Endothelial cell of umbilical vein (primary cell): ENCODE measurements at regions of chr13 and their contacts with region 1.

Region 1: DNA sequence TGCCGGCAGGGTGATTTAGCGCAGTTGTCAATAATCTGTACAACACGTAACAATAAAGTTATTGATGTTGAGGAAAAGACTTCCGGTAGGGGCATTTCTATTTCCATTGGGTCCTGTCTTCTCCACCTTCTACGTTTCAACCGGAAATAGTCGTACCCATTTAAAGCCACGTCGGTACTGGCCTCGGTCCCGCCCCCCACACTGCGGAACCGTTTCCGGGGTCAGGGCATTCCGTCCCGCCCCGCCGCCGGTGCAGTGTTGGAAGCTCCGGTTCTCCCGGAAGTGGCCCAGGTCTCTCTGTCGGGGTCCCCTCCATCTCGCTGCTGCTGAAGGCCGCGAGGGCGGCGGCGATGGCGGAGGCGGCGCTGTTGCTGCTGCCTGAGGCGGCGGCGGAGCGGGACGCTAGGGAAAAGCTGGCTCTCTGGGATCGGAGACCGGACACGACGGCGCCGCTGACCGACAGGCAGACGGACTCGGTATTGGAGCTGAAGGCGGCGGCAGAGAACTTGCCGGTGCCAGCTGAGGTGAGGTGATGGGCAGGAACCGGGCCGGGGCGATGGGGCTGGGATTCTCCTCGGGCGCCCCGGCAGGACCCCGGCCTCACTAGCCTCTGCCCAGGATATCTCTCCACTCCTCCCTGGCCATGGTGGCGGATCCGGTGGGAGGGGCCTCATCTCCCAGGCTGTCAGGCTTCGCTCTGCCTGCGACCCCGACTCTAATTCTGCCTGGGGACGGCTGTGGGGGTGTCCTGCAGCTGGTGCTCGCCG is at the start of gene COG3:
- DNase-seq: peak; percentile 96
- H3K4me3 ChIP-seq: peak within 1 kb of the TSS; percentile 44 to 86 (median 71)
- H3K27ac ChIP-seq: peak within 1 kb of the TSS; percentile 72
- H3K4me1 ChIP-seq: peaks cover 12% of the 10 kb centered on the region
- H3K27me3 ChIP-seq: peaks cover 4 to 8% of the 10 kb centered on the region in 2 experiments
- CTCF ChIP-seq: peak in 1 of 2 donors; percentile 25
- POLR2A ChIP-seq: peak; percentile 63
- total RNA-seq, gene COG3: 27.0 and 28.7 TPM in 2 replicates

Region 2: DNA sequence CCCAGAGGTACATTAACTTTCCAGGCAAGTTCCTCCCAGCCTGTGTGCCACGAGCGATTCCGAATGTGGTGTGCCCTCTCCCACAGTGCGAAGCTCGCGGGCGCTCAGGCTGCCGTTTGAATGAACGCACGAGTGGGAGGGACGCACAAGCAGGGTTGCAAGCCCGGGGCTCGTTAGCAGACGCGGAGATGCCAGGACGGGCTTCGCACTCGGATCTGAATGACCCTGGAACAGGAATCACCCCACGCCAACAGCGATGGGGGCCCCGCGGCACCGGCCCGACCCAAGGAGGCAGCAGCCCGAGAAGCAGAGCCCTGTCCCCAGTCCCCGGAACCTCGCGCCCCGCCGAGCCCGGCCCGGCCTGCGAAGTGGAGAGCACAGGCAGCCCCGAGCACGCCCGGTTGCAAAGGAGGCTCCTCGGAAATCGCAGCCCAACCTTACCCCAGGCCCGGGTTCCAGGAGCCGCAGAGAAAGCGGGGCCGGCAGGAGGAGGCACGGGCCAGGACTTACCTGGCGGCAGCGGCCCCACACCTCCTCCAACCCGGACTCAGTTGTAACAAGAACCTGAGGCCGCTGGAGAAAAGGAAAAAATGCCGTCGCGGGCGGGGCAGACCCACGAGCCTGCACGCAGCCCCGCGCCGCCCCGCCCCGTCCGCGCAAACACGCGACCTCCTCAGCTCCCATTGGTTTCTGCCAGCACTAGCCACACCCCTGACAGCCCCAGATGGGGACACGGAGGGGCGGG is 46.9 kb before region 1 on chr13 and contains the start of gene SLC25A30:
- CTCF ChIA-PET with region 1: interaction called, 16 read pairs
- POLR2A ChIA-PET with region 1: interaction called, 4 read pairs
- dilution Hi-C with region 1: no loop called
- intact Hi-C with region 1: loop called (anchors 1 kb)
- DNase-seq: peak; percentile 94
- H3K4me3 ChIP-seq: peak within 1 kb of the TSS; percentile 66 to 87 (median 79)
- H3K27ac ChIP-seq: peak within 1 kb of the TSS; percentile 56
- H3K4me1 ChIP-seq: peaks cover 24% of the 10 kb centered on the region
- H3K27me3 ChIP-seq: no peaks in the 10 kb centered on the region
- CTCF ChIP-seq: no peak
- POLR2A ChIP-seq: peak; percentile 78
- total RNA-seq, gene SLC25A30: 27.0 and 28.9 TPM in 2 replicates

Region 3: DNA sequence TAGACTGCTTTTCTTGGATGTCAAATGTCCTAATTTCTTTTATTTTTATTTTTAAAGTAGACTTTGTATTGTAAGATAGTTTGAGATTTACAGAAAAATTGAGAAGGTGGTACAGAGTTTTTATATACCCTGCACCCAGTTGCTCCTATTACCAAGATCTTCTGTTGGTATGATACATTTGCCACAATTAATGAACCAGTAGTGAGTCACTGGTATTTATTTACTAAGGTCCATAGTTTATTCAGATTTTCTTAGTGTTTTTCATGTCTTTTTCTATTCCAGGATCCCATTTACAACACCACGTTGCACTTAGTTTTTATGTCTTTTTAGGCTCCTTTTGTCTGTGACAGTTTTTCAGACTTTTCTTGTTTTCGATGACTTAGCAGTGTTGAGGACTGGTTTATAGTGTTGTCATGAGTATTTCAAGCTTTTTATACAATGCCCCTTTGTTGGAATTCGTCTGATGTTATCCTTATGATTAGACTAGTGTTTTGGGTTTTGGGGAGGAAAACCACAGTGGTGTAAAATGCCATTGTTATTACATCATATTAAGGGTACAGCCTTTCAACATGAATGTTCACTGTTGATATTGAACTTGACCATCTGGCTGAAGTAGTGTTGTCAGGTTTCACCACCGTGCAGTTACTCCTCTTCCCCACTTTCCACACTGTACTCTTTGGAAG is 35.8 kb after region 1 on chr13:
- CTCF ChIA-PET with region 1: interaction called, 3 read pairs
- POLR2A ChIA-PET with region 1: interaction called, 3 read pairs
- dilution Hi-C with region 1: no loop called
- intact Hi-C with region 1: loop called (anchors 2 kb)
- DNase-seq: peak; percentile 71
- H3K4me3 ChIP-seq: no peak overlapping the region
- H3K27ac ChIP-seq: peak overlapping the region; percentile 88
- H3K4me1 ChIP-seq: peaks cover 22% of the 10 kb centered on the region
- H3K27me3 ChIP-seq: no peaks in the 10 kb centered on the region
- CTCF ChIP-seq: no peak
- POLR2A ChIP-seq: no peak